ENCODE measurements at regions of chr1 and their contacts with region 1.

Region 1: GRCh38 chr1:32773018-32773763 is 44.0 kb downstream of the YARS1 start:
- DNase-seq: peak; percentile 41 to 55 (median 47)
- H3K4me3 ChIP-seq: no peak overlapping the region
- H3K4me3 Mint-ChIP-seq: no peak overlapping the region
- H3K27ac ChIP-seq: no peak overlapping the region
- H3K27ac Mint-ChIP-seq: peak overlapping the region in 2 of 7 donors; percentile 4 to 42
- H3K4me1 ChIP-seq: no peaks in the 10 kb centered on the region
- H3K4me1 Mint-ChIP-seq: peaks cover 2% of the 10 kb centered on the region
- H3K27me3 ChIP-seq: no peaks in the 10 kb centered on the region
- H3K27me3 Mint-ChIP-seq: no peaks in the 10 kb centered on the region
- CTCF ChIP-seq: peak; percentile 94

Region 2: GRCh38 chr1:32521165-32521564 is 252.0 kb before region 1 on chr1:
- intact Hi-C with region 1: loop called (anchors 2 to 5 kb)
- DNase-seq: no peak
- H3K4me3 ChIP-seq: no peak overlapping the region
- H3K4me3 Mint-ChIP-seq: peak overlapping the region; percentile 10 to 75
- H3K27ac ChIP-seq: no peak overlapping the region
- H3K27ac Mint-ChIP-seq: no peak overlapping the region
- H3K4me1 ChIP-seq: peaks cover 4 to 5% of the 10 kb centered on the region in 2 donors
- H3K4me1 Mint-ChIP-seq: peaks cover 3% of the 10 kb centered on the region
- H3K27me3 ChIP-seq: no peaks in the 10 kb centered on the region
- H3K27me3 Mint-ChIP-seq: peaks cover 4 to 10% (median 10%) of the 10 kb centered on the region in 3 donors
- CTCF ChIP-seq: no peak

Region 3: DNA sequence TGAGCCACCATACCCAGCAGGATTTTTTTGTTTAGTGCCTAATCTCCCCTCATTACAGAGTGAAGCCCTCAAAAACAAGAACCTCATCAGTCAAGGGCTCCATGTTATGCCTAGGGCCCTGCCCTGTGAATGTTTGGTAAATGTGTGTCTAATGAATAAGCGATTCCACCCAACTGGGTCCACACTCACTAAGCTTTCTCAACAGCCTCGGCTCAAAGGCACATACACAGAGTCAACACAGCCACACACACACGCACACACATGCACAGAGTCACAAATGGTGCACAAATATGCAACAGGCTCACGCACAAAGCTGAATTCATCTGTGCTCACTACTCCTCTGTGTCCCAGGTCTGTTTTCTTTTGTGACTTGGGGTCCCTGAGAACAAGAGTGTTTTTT is 58.9 kb before region 1 on chr1:
- intact Hi-C with region 1: loop called (anchors 5 kb)
- DNase-seq: no peak
- H3K4me3 ChIP-seq: no peak overlapping the region
- H3K4me3 Mint-ChIP-seq: no peak overlapping the region
- H3K27ac ChIP-seq: no peak overlapping the region
- H3K27ac Mint-ChIP-seq: no peak overlapping the region
- H3K4me1 ChIP-seq: peaks cover 17 to 31% of the 10 kb centered on the region in 2 donors
- H3K4me1 Mint-ChIP-seq: peaks cover 30% of the 10 kb centered on the region
- H3K27me3 ChIP-seq: no peaks in the 10 kb centered on the region
- H3K27me3 Mint-ChIP-seq: peaks cover 3 to 15% (median 10%) of the 10 kb centered on the region in 3 donors
- CTCF ChIP-seq: no peak

Measured in CD14-positive monocyte (primary cell).